ENCODE measurements at regions of chr3 and their contacts with region 1.

Region 1: DNA sequence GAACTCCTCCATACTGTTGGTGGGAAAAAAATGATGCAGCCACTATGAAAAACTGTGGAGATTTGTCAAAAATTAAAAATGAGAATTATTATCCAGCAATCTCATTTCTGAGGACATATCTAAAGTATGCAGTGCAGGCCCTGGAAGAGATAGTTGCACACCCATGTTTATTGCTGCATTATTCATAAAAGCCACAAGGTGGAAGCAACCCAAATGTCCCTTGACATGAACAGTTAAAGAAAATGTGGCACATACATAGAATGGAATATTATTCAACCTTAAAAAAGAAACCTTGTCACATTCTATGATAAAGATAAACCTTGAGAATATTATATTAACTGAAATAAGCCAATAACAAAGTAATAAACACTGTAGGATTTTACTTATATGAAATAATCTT is 80.9 kb upstream of the ARHGEF26 start:
- DNase-seq: peak; percentile 69
- ATAC-seq: peak; percentile 93
- H3K4me3 ChIP-seq: no peak overlapping the region
- H3K27ac ChIP-seq: no peak overlapping the region
- H3K4me1 ChIP-seq: no peaks in the 10 kb centered on the region
- H3K27me3 ChIP-seq: 0 out of 2 replicates have a peak, but pooled peaks cover 4% of the 10 kb centered on the region
- CTCF ChIP-seq: peak; percentile 68

Region 2: GRCh38 chr3:152811974-152812760 is 1228.1 kb before region 1 on chr3:
- CTCF ChIA-PET with region 1: no interaction called
- POLR2A ChIA-PET with region 1: interaction called, 10 read pairs
- intact Hi-C with region 1: no loop called
- DNase-seq: no peak
- ATAC-seq: no peak; the same call in 1 of the 2 replicates
- H3K4me3 ChIP-seq: no peak overlapping the region
- H3K27ac ChIP-seq: no peak overlapping the region
- H3K4me1 ChIP-seq: no peaks in the 10 kb centered on the region
- H3K27me3 ChIP-seq: peaks cover 45% of the 10 kb centered on the region
- CTCF ChIP-seq: no peak

Region 3: GRCh38 chr3:154095832-154096421 is 55.6 kb after region 1 on chr3:
- CTCF ChIA-PET with region 1: no interaction called
- POLR2A ChIA-PET with region 1: no interaction called
- intact Hi-C with region 1: loop called (anchors 5 kb)
- DNase-seq: peak; percentile 55
- ATAC-seq: peak; percentile 84
- H3K4me3 ChIP-seq: no peak overlapping the region
- H3K27ac ChIP-seq: no peak overlapping the region
- H3K4me1 ChIP-seq: no peaks in the 10 kb centered on the region
- H3K27me3 ChIP-seq: no peaks in the 10 kb centered on the region
- CTCF ChIP-seq: peak; percentile 80

Measured in PC-3 (cell line).